ENCODE measurements at regions of chr1 and their contacts with region 1.

Region 1: GRCh38 chr1:167059045-167059808 is 30.9 kb downstream of the GPA33 start:
- DNase-seq: no peak
- H3K4me3 ChIP-seq: peak overlapping the region in 1 of 4 donors; percentile 28
- H3K27ac ChIP-seq: no peak overlapping the region
- H3K4me1 ChIP-seq: peaks cover 8 to 9% (median 9%) of the 10 kb centered on the region in 3 donors
- H3K27me3 ChIP-seq: peaks cover 0 to 27% (median 0%) of the 10 kb centered on the region in 4 donors
- CTCF ChIP-seq: peak; percentile 88 to 97 (median 92)
- POLR2A ChIP-seq: no peak

Region 2: DNA sequence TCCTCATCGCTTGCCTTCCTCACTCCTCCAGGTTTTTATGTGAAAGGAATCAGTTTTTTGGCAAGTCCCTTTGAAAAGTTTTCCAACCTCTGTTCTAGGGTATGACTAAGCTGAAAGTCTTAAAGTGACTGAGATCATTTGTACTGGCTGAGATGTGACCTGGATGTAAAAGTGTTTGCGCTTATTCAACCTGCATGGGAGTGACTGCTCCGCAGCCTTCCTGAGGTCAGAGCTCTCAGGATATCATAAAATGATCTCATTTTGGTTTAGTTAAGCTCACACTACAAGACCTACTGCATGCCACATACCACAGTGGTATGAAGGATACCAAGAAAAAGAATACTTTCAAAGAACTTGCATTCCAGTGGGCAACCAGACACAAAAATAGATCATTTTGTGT is 153.3 kb before region 1 on chr1:
- intact Hi-C with region 1: loop called (anchors 5 kb)
- DNase-seq: no peak
- H3K4me3 ChIP-seq: no peak overlapping the region
- H3K27ac ChIP-seq: peak overlapping the region in 2 of 4 donors; percentile 36 to 71
- H3K4me1 ChIP-seq: peaks cover 0 to 25% (median 0%) of the 10 kb centered on the region in 3 donors
- H3K27me3 ChIP-seq: no peaks in the 10 kb centered on the region
- CTCF ChIP-seq: no peak
- POLR2A ChIP-seq: no peak

Region 3: DNA sequence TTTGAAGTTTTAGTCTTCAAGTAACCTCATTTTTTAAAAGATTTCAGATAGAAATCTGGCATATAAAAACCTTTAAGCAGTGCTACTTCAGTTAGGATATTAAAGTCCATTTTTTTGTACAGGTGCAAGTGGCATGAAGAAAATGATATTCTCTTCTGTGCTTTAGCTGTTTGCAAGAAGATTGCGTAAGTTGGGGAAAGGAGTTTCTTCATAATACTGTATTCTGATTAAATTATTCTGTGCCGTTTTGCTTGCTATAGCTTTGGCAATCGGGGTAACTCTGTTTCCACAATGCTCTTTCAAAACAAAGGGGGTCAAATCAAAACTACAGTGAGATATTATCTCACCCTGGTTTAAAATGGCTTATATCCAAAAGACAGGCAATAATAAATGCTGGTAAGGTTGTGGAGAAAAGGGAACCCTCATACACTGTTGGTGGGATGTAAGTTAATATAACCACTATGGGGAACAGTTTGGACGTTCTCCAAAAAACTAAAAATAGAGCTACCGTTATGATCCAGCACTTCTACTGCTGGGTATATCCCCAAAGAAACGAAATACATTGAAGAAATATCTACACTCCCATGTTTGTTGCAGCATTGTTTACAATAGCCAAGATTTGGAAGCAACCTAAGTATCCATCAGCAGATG is 43.0 kb before region 1 on chr1:
- intact Hi-C with region 1: no loop called
- DNase-seq: no peak
- H3K4me3 ChIP-seq: no peak overlapping the region
- H3K27ac ChIP-seq: no peak overlapping the region
- H3K4me1 ChIP-seq: no peaks in the 10 kb centered on the region
- H3K27me3 ChIP-seq: no peaks in the 10 kb centered on the region
- CTCF ChIP-seq: no peak
- POLR2A ChIP-seq: no peak

Measured in esophagus squamous epithelium (tissue), 5 donors.